Activated CD4-positive, alpha-beta T cell treated with anti-CD3 and anti-CD28 coated beads for 36 hours (primary cell): ENCODE measurements at regions of chr10 and their contacts with region 1.

Region 1: DNA sequence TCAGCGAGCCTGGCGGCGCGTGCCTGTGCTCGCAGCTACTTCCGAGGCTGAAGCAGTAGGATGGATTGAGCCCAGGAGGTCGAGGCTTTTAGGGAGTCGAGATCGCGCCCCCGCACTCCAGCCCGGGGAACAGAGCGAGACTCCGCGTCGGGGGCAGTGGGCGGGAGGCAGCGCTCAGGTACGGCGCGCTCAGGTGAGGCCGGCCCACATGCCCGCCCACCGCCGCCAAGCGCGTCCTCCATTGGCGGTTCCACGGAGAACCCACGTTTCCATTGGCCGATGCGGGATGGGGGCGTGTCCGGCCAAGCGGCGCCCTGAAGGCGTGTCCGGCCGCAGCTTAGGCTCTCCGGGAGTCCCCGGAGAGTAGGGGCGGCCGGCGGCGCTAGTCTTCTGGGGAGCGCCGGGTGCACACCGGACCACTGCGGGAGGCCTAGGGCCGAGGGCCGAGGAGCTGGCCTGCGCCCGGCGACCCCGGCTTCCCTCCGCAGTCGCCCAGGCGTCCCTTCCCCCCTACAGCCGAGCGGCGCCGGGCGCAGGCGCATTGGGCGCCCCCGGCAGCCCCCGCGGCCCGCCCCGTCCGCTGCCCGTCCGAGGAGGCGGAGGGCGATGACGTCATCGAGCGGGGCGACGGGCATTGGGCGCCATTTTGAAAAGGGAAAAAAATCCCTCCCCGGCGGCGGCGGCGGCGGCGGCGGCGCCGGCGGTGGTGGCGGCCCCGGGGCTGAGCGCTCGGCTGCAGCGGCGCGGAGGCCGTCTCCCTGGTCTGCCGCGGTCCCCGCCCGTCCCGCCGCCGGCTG is at the start of gene PPP2R2D:
- DNase-seq: peak; percentile 97
- ATAC-seq: peak; percentile 83
- H3K4me3 Mint-ChIP-seq: peak within 1 kb of the TSS; percentile 93
- H3K27ac Mint-ChIP-seq: peak within 1 kb of the TSS; percentile 92
- H3K4me1 Mint-ChIP-seq: peaks cover 53% of the 10 kb centered on the region
- H3K27me3 Mint-ChIP-seq: peaks cover 7% of the 10 kb centered on the region
- total RNA-seq, gene PPP2R2D: 30.0 to 39.3 TPM

Region 2: GRCh38 chr10:132158122-132158741 is 257.7 kb after region 1 on chr10:
- CTCF ChIA-PET with region 1: no interaction called
- POLR2A ChIA-PET with region 1: no interaction called
- intact Hi-C with region 1: loop called in 1 of 2 experiments (anchors 2 kb)
- DNase-seq: peak; percentile 57
- ATAC-seq: peak; percentile 56
- H3K4me3 Mint-ChIP-seq: no peak overlapping the region
- H3K27ac Mint-ChIP-seq: peak overlapping the region; percentile 82
- H3K4me1 Mint-ChIP-seq: peaks cover 22% of the 10 kb centered on the region
- H3K27me3 Mint-ChIP-seq: no peaks in the 10 kb centered on the region

Region 3: GRCh38 chr10:133394064-133394663 is 1493.6 kb after region 1 on chr10 and contains the start of gene MTG1:
- CTCF ChIA-PET with region 1: no interaction called
- POLR2A ChIA-PET with region 1: no interaction called
- intact Hi-C with region 1: loop called in 1 of 2 experiments (anchors 5 kb)
- DNase-seq: peak; percentile 97
- ATAC-seq: peak; percentile 76
- H3K4me3 Mint-ChIP-seq: peak within 1 kb of the TSS; percentile 90
- H3K27ac Mint-ChIP-seq: peak within 1 kb of the TSS; percentile 93
- H3K4me1 Mint-ChIP-seq: peaks cover 51% of the 10 kb centered on the region
- H3K27me3 Mint-ChIP-seq: no peaks in the 10 kb centered on the region
- total RNA-seq, gene MTG1: 46.9 to 52.1 TPM